ENCODE measurements at regions of chr9 and their contacts with region 1.

Region 1: DNA sequence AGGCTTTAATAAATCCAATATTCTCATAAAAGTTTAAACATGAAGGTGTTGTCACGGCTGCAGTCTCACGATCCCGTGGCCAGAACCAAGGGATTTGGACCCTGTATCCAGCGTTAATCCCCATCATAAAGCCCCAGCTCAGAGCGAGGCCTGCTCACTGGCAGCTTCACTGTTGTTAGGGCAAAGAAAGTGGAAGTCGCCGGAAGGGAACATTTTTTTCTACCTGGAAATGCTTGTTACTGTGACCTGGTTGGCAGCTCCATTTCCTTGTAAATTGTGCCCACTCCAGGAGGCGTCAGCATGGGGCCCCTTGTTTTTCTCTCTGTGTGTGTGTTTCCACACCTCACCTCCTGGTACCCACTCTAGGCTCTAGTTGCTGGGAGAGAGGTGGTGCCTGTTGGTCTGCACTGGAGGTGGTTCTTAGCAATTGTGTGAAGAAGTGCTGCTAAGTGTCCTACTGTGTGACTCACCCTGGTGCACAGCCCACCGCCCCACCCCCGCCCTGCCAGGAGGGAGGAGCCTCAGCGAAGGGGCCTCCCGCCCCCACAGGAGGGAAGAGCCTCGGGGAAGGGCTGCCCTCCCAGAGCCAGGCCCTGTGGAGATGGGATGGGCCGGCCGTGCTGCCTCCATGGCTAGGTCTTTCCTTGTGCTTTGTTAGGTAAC is 105.1 kb downstream of the EHMT1 start:
- DNase-seq: no peak
- H3K4me3 ChIP-seq: no peak overlapping the region
- H3K27ac ChIP-seq: no peak overlapping the region
- H3K4me1 ChIP-seq: peaks cover 30% of the 10 kb centered on the region
- H3K27me3 ChIP-seq: no peaks in the 10 kb centered on the region
- CTCF ChIP-seq: no peak

Region 2: DNA sequence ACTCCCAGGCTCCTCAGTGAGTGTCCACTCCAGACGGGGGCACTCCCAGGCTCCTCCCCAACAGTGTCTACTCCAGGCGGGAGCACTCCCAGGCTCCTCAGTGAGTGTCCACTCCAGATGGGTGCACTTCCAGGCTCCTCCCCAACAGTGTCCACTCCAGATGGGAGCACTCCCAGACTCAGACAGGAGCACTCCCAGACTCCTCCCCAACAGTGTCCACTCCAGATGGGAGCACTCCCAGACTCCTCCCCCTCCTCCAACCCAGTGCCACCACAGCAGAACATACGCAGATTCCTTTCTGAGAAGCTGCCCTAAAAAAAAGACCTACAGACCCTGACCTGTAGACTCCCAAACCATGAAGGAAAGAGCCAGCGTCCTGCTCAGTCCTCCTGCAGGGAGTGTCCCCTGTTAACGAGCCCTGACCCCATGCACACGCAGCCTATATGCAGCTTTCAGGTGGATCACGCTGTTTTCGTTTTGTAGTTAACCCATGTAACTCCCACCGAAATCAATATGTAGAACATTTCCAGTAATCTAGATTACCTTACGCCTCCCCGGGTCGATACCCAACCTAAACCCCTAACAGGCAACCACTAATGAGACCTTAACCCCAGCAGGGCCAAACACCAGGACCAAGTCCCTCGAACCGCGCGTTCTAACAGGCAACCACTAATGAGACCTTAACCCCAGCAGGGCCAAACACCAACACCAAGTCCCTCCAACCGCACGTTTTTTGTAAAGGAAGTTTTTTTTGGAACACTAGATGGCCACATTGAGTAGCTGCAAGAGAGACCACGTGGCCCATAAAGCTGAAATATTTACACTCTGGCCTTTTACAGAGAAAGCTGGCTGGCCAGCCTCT is 189.4 kb before region 1 on chr9:
- CTCF ChIA-PET with region 1: interaction called, 19 read pairs
- dilution Hi-C with region 1: no loop called
- in situ Hi-C with region 1: no loop called
- intact Hi-C with region 1: no loop called
- DNase-seq: peak; percentile 32
- H3K4me3 ChIP-seq: no peak overlapping the region
- H3K27ac ChIP-seq: no peak overlapping the region
- H3K4me1 ChIP-seq: no peaks in the 10 kb centered on the region
- H3K27me3 ChIP-seq: no peaks in the 10 kb centered on the region
- CTCF ChIP-seq: peak; percentile 56 to 73

Region 3: DNA sequence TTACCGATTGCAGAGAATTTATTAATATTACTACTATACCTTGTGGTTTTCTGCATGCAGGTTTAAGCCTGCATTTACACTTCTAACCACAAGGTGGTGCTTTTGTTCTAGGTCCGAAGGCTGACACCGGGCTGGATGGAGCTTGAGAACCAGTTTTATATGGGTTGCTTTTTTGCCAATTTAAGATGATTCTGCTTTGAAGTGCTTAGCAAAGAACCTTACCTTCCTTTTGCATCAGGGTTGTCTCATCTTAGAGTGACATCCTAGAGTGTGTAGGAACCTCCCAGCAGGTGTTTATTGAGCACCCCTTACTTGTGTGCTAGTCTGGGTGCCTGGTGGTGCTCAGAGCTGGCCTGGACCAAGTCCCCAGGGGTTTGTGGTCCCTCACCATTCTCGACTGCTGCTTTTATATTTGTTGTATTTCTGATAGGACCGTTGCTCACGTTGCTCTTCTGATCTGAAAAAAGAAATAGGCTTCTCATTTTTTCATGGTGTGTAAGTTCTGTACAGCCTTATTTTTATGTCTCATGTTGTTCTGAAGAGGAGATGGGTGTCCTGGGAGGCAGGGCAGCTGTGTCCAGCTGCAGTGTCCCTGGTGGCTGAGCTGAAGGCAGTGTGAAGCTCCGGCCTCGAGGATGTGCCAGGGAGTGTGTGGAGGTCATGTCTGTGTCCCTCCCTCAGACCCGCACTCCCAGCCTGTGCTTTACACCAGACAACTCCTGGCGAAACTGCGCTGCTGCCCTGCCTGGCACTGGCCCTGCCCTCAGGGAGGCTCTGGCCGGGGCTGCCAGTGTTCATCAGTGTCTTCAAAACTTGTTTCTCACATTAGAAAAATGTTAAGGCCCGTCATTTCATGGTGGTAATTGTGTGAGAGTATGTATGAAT is 50.8 kb before region 1 on chr9:
- CTCF ChIA-PET with region 1: interaction called, 3 read pairs
- dilution Hi-C with region 1: loop called (anchors 5 kb)
- in situ Hi-C with region 1: no loop called
- intact Hi-C with region 1: loop called (anchors 5 kb)
- DNase-seq: peak; percentile 48
- H3K4me3 ChIP-seq: no peak overlapping the region
- H3K27ac ChIP-seq: no peak overlapping the region
- H3K4me1 ChIP-seq: peaks cover 8% of the 10 kb centered on the region
- H3K27me3 ChIP-seq: no peaks in the 10 kb centered on the region
- CTCF ChIP-seq: peak; percentile 87 to 89

Region 4: GRCh38 chr9:137764981-137765380 is 41.1 kb after region 1 on chr9:
- CTCF ChIA-PET with region 1: no interaction called
- dilution Hi-C with region 1: loop called (anchors 5 kb)
- in situ Hi-C with region 1: no loop called
- intact Hi-C with region 1: no loop called
- DNase-seq: no peak
- H3K4me3 ChIP-seq: no peak overlapping the region
- H3K27ac ChIP-seq: no peak overlapping the region
- H3K4me1 ChIP-seq: no peaks in the 10 kb centered on the region
- H3K27me3 ChIP-seq: no peaks in the 10 kb centered on the region
- CTCF ChIP-seq: no peak

Region 5: DNA sequence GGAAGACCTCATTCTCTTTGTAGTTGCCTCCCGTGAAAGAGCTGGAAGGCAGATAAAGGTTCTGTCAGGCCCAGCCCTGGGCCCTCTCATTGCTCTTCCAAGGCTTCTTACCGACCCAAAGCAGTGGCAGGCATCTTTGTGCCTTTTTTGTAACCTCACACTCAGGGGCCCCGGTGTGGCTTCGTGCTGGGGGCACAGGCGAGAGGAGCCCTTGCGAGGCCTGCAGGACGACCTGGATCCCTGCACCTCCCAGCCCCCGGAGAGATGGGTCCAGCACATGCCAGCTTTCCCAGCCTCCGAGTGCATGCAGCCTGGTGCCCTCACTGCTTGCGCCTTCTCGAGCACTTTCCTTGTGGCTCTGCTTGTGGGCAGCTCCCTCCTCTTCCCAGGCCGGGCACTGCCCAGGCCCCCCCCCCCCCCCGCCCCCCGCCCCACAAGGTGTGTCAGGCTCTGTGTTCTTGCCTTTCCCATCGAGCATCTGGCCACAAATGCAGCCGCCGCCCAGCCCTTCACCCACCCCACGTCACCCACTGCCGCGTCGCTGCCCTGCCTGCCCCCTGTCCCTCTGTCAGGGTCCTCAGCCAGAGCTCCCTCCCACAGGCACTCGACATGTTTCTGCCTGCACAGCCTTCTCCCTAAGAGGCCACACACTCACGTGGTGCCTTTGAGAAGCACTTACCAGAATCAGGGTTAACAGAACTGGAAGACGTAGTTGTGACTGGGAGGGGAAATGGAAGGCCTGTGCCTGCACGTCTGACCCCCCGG is 89.9 kb after region 1 on chr9:
- CTCF ChIA-PET with region 1: no interaction called
- dilution Hi-C with region 1: loop called (anchors 5 kb)
- in situ Hi-C with region 1: no loop called
- intact Hi-C with region 1: no loop called
- DNase-seq: peak; percentile 21
- H3K4me3 ChIP-seq: no peak overlapping the region
- H3K27ac ChIP-seq: no peak overlapping the region
- H3K4me1 ChIP-seq: peaks cover 10% of the 10 kb centered on the region
- H3K27me3 ChIP-seq: no peaks in the 10 kb centered on the region
- CTCF ChIP-seq: no peak

Region 6: GRCh38 chr9:138069731-138070456 is 346.0 kb after region 1 on chr9:
- CTCF ChIA-PET with region 1: no interaction called
- dilution Hi-C with region 1: loop called (anchors 10 kb)
- in situ Hi-C with region 1: no loop called
- intact Hi-C with region 1: no loop called
- DNase-seq: no peak
- H3K4me3 ChIP-seq: no peak overlapping the region
- H3K27ac ChIP-seq: no peak overlapping the region
- H3K4me1 ChIP-seq: no peaks in the 10 kb centered on the region
- H3K27me3 ChIP-seq: no peaks in the 10 kb centered on the region
- CTCF ChIP-seq: no peak